Endothelial cell of umbilical vein (primary cell): ENCODE measurements at regions of chr22 and their contacts with region 1.

Region 1: GRCh38 chr22:31107178-31107893 is at the start of gene SELENOM:
- DNase-seq: peak; percentile 98
- H3K4me3 ChIP-seq: peak within 1 kb of the TSS; percentile 10 to 85 (median 60)
- H3K27ac ChIP-seq: peak within 1 kb of the TSS; percentile 64
- H3K4me1 ChIP-seq: peaks cover 11% of the 10 kb centered on the region
- H3K27me3 ChIP-seq: no peaks in the 10 kb centered on the region
- CTCF ChIP-seq: peak; percentile 97 to 99
- POLR2A ChIP-seq: peak; percentile 71
- total RNA-seq, gene SELENOM: 29.6 TPM in 2 replicates

Region 2: DNA sequence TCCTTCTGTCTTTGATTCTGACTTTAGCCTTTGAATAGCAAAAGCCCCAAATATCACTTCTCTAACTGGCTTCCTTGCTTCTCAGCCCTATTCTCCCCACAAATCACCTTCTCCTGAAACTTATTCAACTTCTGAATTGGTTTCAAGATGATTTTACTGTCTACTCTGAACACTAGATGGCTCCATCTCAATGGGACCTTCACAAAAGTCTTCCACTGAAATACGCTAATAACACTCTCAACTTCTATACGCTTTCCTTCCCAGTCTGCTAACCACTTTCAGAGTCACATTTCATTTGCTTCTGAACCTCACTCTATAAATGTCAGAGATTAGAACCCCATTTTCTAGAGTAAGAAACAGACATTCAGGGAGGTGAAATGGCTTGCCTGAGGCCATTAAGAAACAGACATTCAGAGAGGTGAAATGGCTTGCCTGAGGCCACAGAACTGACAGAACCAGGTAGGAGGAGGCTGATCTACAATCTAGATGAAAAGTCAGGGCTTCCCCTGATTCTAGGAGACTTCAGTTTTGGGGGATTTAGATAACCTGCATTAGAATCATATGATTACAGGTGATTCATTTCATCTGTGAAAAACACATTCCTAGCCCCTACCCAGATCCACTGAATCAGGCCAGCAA is 159.4 kb before region 1 on chr22:
- CTCF ChIA-PET with region 1: interaction called, 10 read pairs
- POLR2A ChIA-PET with region 1: no interaction called
- dilution Hi-C with region 1: no loop called
- intact Hi-C with region 1: no loop called
- DNase-seq: peak; percentile 63
- H3K4me3 ChIP-seq: no peak overlapping the region
- H3K27ac ChIP-seq: no peak overlapping the region
- H3K4me1 ChIP-seq: no peaks in the 10 kb centered on the region
- H3K27me3 ChIP-seq: no peaks in the 10 kb centered on the region
- CTCF ChIP-seq: peak; percentile 16 to 40
- POLR2A ChIP-seq: no peak

Region 3: GRCh38 chr22:31089160-31090100 is 17.9 kb before region 1 on chr22:
- CTCF ChIA-PET with region 1: interaction called, 28 read pairs
- POLR2A ChIA-PET with region 1: no interaction called
- dilution Hi-C with region 1: no loop called
- intact Hi-C with region 1: loop called (anchors 1 kb)
- DNase-seq: peak; percentile 34
- H3K4me3 ChIP-seq: no peak overlapping the region
- H3K27ac ChIP-seq: no peak overlapping the region
- H3K4me1 ChIP-seq: peaks cover 5% of the 10 kb centered on the region
- H3K27me3 ChIP-seq: no peaks in the 10 kb centered on the region
- CTCF ChIP-seq: peak; percentile 76 to 85
- POLR2A ChIP-seq: no peak

Region 4: DNA sequence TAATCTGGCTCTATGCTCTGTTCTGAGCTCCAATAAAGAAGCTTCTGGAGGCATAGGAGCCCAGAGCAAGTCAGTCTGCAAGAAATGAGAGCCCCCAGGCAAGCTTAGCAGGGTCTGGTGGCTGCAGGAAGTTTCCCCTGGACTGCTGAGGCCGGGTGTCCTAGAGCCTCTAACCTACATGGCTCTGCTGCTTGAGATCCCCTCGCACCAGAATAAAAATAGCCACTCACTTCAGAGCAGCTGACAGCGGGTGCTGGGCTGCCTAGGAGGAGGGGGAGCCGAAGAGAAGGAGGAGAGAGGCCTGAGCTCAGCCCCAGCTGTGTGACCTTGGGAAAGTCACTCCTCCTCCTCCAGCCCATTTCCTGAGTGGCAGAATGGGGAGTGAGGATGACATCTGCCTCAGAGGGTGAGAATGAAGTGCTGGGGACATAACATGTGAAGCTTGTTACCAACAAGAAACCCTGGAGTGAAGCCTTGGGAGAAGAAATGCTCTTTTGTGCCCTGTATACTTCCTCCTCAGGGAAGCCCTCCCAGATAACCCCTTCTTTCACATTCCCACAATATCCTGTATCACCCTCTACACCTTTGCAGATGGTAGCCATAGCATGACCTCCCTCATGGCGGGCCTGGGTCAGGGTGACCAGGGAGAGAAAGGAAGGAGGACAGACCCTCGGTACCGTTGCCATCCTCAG is 11.8 kb after region 1 on chr22:
- CTCF ChIA-PET with region 1: interaction called, 13 read pairs
- POLR2A ChIA-PET with region 1: no interaction called
- dilution Hi-C with region 1: no loop called
- intact Hi-C with region 1: no loop called
- DNase-seq: no peak
- H3K4me3 ChIP-seq: no peak overlapping the region
- H3K27ac ChIP-seq: no peak overlapping the region
- H3K4me1 ChIP-seq: no peaks in the 10 kb centered on the region
- H3K27me3 ChIP-seq: no peaks in the 10 kb centered on the region
- CTCF ChIP-seq: no peak
- POLR2A ChIP-seq: no peak

Region 5: DNA sequence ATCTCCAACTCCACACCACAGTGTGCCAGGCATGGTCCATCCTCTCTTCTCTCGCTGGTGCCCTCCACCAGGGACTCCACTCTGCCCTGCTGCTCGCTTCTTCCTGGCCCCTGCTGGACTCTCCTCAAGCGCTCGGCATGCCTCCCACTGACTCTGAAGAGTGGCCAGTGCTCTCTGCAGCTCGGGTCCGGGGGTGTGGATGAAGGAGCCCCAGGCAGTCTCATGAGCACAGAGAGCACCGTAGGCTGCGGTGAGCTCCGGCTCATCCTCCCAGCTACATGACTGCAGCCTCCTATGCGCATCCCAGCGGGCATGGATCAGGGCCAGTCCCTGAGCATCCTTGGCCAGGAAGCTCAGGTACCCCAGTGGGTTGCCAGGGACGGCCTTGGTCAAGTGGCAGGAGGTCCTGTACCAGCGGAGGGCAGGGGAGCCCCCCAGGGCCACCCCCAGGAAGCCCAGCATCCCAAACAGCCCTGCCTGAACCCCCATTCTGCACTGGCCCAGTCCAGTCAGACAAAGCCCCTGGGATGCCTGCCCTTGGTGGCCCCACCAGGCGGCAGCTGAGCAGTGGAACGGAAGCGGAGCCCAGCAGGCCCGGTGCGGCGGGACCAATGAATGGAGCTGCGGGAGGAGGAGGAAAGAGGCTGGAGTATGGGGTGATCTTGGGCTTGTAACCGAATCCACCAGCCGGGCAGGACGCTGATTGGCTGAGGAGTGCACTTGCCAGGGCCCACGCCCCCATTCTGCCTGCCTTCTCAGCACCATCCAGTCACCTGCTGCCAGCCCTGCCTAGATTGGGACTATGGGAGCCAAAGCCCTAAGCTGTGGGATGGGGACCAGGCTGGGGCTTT is 32.8 kb after region 1 on chr22 and contains the start of gene PLA2G3:
- CTCF ChIA-PET with region 1: interaction called, 30 read pairs
- POLR2A ChIA-PET with region 1: interaction called, 5 read pairs
- dilution Hi-C with region 1: no loop called
- intact Hi-C with region 1: no loop called
- DNase-seq: peak; percentile 27
- H3K4me3 ChIP-seq: no peak within 1 kb of the TSS
- H3K27ac ChIP-seq: no peak within 1 kb of the TSS
- H3K4me1 ChIP-seq: no peaks in the 10 kb centered on the region
- H3K27me3 ChIP-seq: no peaks in the 10 kb centered on the region
- CTCF ChIP-seq: peak in 1 of 2 donors; percentile 19
- POLR2A ChIP-seq: no peak
- total RNA-seq, gene PLA2G3: 0.75 and 1.0 TPM in 2 replicates

Region 6: GRCh38 chr22:31211862-31212730 is 104.8 kb after region 1 on chr22 and contains the start of gene LIMK2:
- CTCF ChIA-PET with region 1: interaction called, 21 read pairs
- POLR2A ChIA-PET with region 1: interaction called, 3 read pairs
- dilution Hi-C with region 1: no loop called
- intact Hi-C with region 1: loop called (anchors 1 kb)
- DNase-seq: peak; percentile 88
- H3K4me3 ChIP-seq: peak within 1 kb of the TSS; percentile 86 to 97 (median 92)
- H3K27ac ChIP-seq: peak within 1 kb of the TSS; percentile 93
- H3K4me1 ChIP-seq: peaks cover 60% of the 10 kb centered on the region
- H3K27me3 ChIP-seq: no peaks in the 10 kb centered on the region
- CTCF ChIP-seq: peak; percentile 76 to 85
- POLR2A ChIP-seq: peak; percentile 88
- total RNA-seq, gene LIMK2: 71.7 and 76.7 TPM in 2 replicates

Region 7: GRCh38 chr22:31248138-31248745 is 140.9 kb after region 1 on chr22:
- CTCF ChIA-PET with region 1: interaction called, 14 read pairs
- POLR2A ChIA-PET with region 1: no interaction called
- dilution Hi-C with region 1: no loop called
- intact Hi-C with region 1: no loop called
- DNase-seq: peak; percentile 60
- H3K4me3 ChIP-seq: no peak overlapping the region
- H3K27ac ChIP-seq: no peak overlapping the region
- H3K4me1 ChIP-seq: peaks cover 23% of the 10 kb centered on the region
- H3K27me3 ChIP-seq: no peaks in the 10 kb centered on the region
- CTCF ChIP-seq: no peak
- POLR2A ChIP-seq: no peak